Activated CD8-positive, alpha-beta T cell treated with anti-CD3 and anti-CD28 coated beads, Interleukin-2, amount 10 ng/mL, durations not matched to agents 7 days and 5 days (primary cell): ENCODE measurements at regions of chr16 and their contacts with region 1.

Region 1: GRCh38 chr16:85821441-85822135 is 22.1 kb downstream of the COX4I1 start:
- DNase-seq: peak; percentile 84
- ATAC-seq: peak; percentile 83
- H3K4me3 Mint-ChIP-seq: no peak overlapping the region
- H3K27ac Mint-ChIP-seq: no peak overlapping the region
- H3K4me1 Mint-ChIP-seq: peaks cover 9% of the 10 kb centered on the region
- H3K27me3 Mint-ChIP-seq: peaks cover 3% of the 10 kb centered on the region

Region 2: DNA sequence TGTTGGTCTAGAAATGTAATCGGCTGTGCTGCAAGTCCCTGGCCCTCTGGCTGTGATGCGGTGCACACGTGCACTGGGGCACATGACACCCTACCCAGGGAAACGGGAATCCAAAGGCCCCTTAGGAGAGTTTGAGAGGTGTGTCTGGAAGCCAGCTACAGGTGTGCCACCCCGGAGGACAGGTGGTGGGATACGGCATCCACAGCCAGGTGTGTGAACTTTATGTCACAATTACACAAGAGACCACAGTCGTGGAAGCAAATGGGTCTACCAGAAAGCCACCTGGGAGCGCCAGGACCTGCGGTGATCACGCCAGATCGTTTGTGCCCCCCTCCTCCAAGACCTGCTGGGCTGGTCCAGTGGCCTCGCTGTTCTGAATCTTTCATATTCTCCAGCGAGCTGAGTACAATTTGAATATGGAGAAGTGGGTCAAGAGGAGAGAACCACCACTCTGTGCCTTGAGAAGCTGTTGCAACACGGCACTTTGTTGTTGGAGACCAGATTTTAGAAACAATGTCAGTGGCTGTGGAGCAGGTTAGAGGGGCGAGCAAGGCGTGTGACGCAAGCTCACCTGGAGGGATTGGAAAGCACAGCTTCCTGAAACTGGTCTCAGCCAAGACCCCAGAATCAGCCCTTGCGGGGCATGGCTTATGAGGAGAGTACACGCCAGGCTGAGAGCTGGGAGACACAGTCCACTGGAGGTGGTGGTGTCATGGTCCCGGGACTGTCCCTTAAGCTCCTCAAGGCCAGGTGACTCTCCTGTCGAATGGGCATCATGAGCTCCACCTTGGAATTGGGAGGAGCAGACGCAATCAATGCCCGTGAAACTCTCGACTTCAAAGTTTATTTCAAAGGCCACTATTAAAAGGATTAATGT is 15.4 kb after region 1 on chr16:
- CTCF ChIA-PET with region 1: interaction called, 15 read pairs
- POLR2A ChIA-PET with region 1: no interaction called
- DNase-seq: no peak
- ATAC-seq: no peak
- H3K4me3 Mint-ChIP-seq: no peak overlapping the region
- H3K27ac Mint-ChIP-seq: no peak overlapping the region
- H3K4me1 Mint-ChIP-seq: no peaks in the 10 kb centered on the region
- H3K27me3 Mint-ChIP-seq: peaks cover 13% of the 10 kb centered on the region

Region 3: GRCh38 chr16:85878874-85879273 is 57.3 kb after region 1 on chr16:
- CTCF ChIA-PET with region 1: no interaction called
- POLR2A ChIA-PET with region 1: no interaction called
- DNase-seq: no peak
- ATAC-seq: no peak
- H3K4me3 Mint-ChIP-seq: no peak overlapping the region
- H3K27ac Mint-ChIP-seq: no peak overlapping the region
- H3K4me1 Mint-ChIP-seq: peaks cover 12% of the 10 kb centered on the region
- H3K27me3 Mint-ChIP-seq: peaks cover 29% of the 10 kb centered on the region

Region 4: GRCh38 chr16:85908444-85908843 is 86.9 kb after region 1 on chr16:
- CTCF ChIA-PET with region 1: interaction called, 39 read pairs
- POLR2A ChIA-PET with region 1: no interaction called
- DNase-seq: no peak
- ATAC-seq: peak; percentile 45
- H3K4me3 Mint-ChIP-seq: no peak overlapping the region
- H3K27ac Mint-ChIP-seq: peak overlapping the region; percentile 76
- H3K4me1 Mint-ChIP-seq: peaks cover 57% of the 10 kb centered on the region
- H3K27me3 Mint-ChIP-seq: no peaks in the 10 kb centered on the region

Region 5: DNA sequence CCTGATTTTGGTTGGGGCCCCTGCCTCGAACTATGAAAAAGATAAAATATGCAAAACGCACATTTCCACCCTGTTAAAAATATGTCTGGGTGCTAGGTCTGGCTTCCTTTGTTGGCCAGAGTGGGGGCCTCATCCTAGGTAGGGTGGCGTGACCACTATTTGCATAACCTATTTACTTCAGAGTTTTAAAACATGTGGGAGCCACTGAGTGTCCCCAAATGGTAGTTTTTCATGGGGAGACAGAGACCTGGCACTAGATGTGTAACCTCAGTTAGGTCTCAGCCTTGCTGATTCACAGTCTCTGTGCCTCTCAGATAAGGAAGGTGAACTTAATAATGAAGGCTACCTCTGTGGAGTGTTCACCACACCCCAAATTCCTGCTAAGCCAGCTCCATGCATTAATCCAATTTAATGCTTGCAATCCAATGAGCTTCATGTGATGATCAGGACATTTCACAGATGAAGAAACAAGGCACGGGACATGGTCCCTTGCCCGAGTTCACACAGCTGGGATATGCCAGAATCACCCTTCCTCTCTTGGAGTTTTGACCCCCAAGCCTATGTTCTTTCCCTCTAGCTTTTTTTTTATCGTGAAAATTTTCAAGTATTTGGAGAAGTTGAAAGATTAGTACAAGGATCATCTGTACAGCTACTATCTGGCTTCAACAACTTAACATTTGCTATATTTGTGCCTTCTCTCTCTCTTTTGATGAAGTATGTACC is 180.8 kb after region 1 on chr16:
- CTCF ChIA-PET with region 1: interaction called, 385 read pairs
- POLR2A ChIA-PET with region 1: no interaction called
- DNase-seq: no peak
- ATAC-seq: no peak
- H3K4me3 Mint-ChIP-seq: no peak overlapping the region
- H3K27ac Mint-ChIP-seq: no peak overlapping the region
- H3K4me1 Mint-ChIP-seq: peaks cover 24% of the 10 kb centered on the region
- H3K27me3 Mint-ChIP-seq: no peaks in the 10 kb centered on the region

Region 6: DNA sequence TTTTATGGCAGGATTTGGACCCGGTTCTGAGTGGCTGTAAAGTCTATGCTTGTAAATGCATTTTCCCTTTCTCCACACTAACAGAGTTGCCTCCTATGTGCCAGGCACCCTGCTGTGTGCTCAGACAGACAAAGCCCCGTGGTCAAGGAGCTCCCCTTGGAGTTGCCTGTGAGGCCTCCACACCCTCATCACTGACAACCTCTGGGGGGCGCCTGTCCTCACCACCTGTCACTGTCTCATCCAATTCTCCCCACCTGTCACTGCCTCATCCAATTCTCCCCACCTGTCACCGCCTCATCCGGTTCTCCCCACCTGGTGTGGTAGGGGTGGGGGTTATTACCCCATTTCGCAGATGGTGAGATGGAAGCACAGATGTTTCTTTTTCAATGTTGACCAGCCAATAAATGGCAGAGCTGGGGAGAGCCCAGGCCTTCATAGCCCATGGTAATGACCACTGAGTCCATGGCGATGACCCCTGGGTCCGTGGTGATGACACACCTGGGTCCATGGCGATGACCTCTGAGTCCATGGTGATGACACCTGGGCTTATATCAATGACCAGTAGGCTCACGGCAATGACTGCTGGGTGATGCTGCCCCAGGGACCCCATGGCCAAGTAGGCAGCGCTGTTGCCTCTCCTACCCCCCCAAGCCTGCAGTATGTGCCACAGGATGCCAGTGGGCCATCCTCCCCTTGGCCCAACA is 227.4 kb after region 1 on chr16:
- CTCF ChIA-PET with region 1: interaction called, 16 read pairs
- POLR2A ChIA-PET with region 1: no interaction called
- DNase-seq: no peak
- ATAC-seq: no peak
- H3K4me3 Mint-ChIP-seq: no peak overlapping the region
- H3K27ac Mint-ChIP-seq: no peak overlapping the region
- H3K4me1 Mint-ChIP-seq: peaks cover 18% of the 10 kb centered on the region
- H3K27me3 Mint-ChIP-seq: peaks cover 29% of the 10 kb centered on the region